A549 (cell line): ENCODE measurements at regions of chr9 and their contacts with region 1.

Region 1: DNA sequence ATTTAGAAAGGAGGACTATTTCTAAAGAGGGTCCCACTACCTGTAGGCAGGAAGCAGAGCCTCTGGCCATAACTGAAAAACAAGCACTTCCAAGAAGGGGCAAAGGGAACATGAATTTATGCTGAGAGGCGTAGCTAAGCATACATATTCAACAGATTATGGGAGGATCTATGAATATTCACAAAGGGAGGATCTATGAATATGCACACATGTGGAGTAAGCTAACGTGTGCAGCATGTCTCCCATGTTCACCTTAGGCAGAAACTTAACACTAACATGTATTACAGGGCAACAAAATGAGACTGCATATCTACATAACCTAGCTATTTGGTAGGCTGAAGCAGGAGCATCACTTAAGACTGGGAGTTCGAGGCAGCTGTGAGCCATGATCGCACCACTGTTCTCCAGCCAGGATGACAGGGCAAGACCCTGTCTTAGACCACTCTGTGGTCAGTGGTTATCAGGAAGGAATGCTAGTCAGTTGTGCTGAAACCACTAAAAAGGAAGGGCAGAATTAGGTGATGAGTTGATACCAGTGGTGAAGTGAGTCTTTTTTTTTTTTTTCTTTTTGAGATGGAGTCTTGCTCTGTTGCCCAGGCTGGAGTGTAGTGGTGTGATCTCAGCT is 20.8 kb downstream of the FXN start:
- DNase-seq: no peak
- ATAC-seq: no peak
- H3K4me3 ChIP-seq: no peak overlapping the region
- H3K27ac ChIP-seq: no peak overlapping the region
- H3K4me1 ChIP-seq: no peaks in the 10 kb centered on the region
- CTCF ChIP-seq: no peak
- EP300 ChIP-seq: no peak
- POLR2A ChIP-seq: no peak
- RAD21 ChIP-seq: no peak

Region 2: GRCh38 chr9:69044240-69045219 is 11.8 kb before region 1 on chr9:
- CTCF ChIA-PET with region 1: interaction called, 23 read pairs
- POLR2A ChIA-PET with region 1: no interaction called
- DNase-seq: no peak
- ATAC-seq: no peak
- H3K4me3 ChIP-seq: no peak overlapping the region
- H3K27ac ChIP-seq: no peak overlapping the region
- H3K4me1 ChIP-seq: no peaks in the 10 kb centered on the region
- CTCF ChIP-seq: no peak
- EP300 ChIP-seq: no peak
- POLR2A ChIP-seq: no peak
- RAD21 ChIP-seq: no peak

Region 3: GRCh38 chr9:69073103-69073502 is 16.8 kb after region 1 on chr9:
- CTCF ChIA-PET with region 1: interaction called, 23 read pairs
- POLR2A ChIA-PET with region 1: no interaction called
- DNase-seq: no peak
- ATAC-seq: no peak
- H3K4me3 ChIP-seq: no peak overlapping the region
- H3K27ac ChIP-seq: no peak overlapping the region
- H3K4me1 ChIP-seq: no peaks in the 10 kb centered on the region
- CTCF ChIP-seq: no peak
- EP300 ChIP-seq: no peak
- POLR2A ChIP-seq: no peak
- RAD21 ChIP-seq: no peak

Region 4: DNA sequence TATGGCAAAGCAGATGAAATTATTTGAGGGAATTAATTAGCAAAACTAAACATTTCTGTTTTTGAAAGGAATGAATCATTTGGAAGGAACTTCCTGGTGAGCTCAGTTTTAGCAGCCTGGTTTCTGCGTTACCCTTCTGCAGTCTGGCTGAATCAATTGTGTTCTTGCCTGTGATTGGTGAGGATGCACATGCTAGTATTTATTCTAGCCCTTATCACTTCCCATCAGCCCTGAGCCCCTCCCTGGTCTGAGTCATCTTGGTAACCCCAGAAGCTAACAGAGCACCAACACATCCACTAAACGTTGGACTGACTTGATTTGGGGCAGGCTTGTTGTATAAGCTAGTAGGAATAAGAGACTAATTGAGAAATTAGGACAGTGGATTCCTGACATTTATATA is 124.4 kb after region 1 on chr9:
- CTCF ChIA-PET with region 1: interaction called, 20 read pairs
- POLR2A ChIA-PET with region 1: interaction called, 4 read pairs
- DNase-seq: peak; percentile 64 to 86
- ATAC-seq: peak; percentile 93 to 97
- H3K4me3 ChIP-seq: no peak overlapping the region
- H3K27ac ChIP-seq: peak overlapping the region; percentile 44 to 75; a peak in 5 of 6 replicates
- H3K4me1 ChIP-seq: peaks cover 34% of the 10 kb centered on the region
- CTCF ChIP-seq: no peak
- EP300 ChIP-seq: no peak
- POLR2A ChIP-seq: no peak
- RAD21 ChIP-seq: no peak

Region 5: GRCh38 chr9:69193685-69194032 is 137.4 kb after region 1 on chr9:
- CTCF ChIA-PET with region 1: interaction called, 237 read pairs
- POLR2A ChIA-PET with region 1: interaction called, 3 read pairs
- DNase-seq: peak in 1 of 2 experiments; percentile 30
- ATAC-seq: peak; percentile 76 to 78; a peak in 5 of 6 replicates
- H3K4me3 ChIP-seq: no peak overlapping the region
- H3K27ac ChIP-seq: no peak overlapping the region
- H3K4me1 ChIP-seq: no peaks in the 10 kb centered on the region
- CTCF ChIP-seq: no peak
- EP300 ChIP-seq: no peak
- POLR2A ChIP-seq: no peak
- RAD21 ChIP-seq: peak in 1 of 2 experiments; percentile 47; a peak in 2 of 5 replicates

Region 6: GRCh38 chr9:69433392-69433791 is 377.1 kb after region 1 on chr9:
- CTCF ChIA-PET with region 1: no interaction called
- POLR2A ChIA-PET with region 1: no interaction called
- DNase-seq: no peak
- ATAC-seq: no peak
- H3K4me3 ChIP-seq: no peak overlapping the region
- H3K27ac ChIP-seq: no peak overlapping the region
- H3K4me1 ChIP-seq: no peaks in the 10 kb centered on the region
- CTCF ChIP-seq: no peak
- EP300 ChIP-seq: no peak
- POLR2A ChIP-seq: no peak
- RAD21 ChIP-seq: no peak